ENCODE measurements at regions of chr11 and their contacts with region 1.

Region 1: GRCh38 chr11:61187505-61188130 is 15.7 kb upstream of the PGA3 start:
- DNase-seq: peak; percentile 40
- H3K4me3 ChIP-seq: no peak overlapping the region
- H3K27ac ChIP-seq: no peak overlapping the region
- H3K4me1 ChIP-seq: no peaks in the 10 kb centered on the region
- H3K27me3 ChIP-seq: no peaks in the 10 kb centered on the region
- CTCF ChIP-seq: peak; percentile 92 to 99

Region 2: DNA sequence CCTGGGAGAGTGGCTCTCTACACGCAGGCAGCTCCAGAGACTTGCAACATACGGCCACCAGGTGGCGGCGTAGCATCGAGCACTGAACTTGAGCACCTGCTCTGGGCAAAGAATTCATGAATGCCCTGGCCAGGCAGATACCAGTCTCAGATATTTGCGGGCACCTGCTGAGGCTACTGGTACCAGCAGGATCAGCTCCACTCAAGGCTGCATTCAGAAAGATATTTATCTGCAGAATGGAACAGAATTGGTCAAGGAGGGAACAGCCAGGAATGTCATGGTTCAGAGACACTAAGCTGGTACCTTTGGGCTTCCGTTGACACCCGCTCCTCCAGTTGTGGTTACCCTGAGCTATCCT is 356.5 kb before region 1 on chr11:
- CTCF ChIA-PET with region 1: no interaction called
- dilution Hi-C with region 1: no loop called
- in situ Hi-C with region 1: no loop called
- intact Hi-C with region 1: loop called (anchors 1 kb)
- DNase-seq: peak; percentile 72
- H3K4me3 ChIP-seq: peak overlapping the region in 1 of 3 experiments; percentile 24
- H3K27ac ChIP-seq: no peak overlapping the region
- H3K4me1 ChIP-seq: peaks cover 23% of the 10 kb centered on the region
- H3K27me3 ChIP-seq: peaks cover 4% of the 10 kb centered on the region
- CTCF ChIP-seq: peak; percentile 95 to 97

Region 3: GRCh38 chr11:60913793-60914632 is 273.6 kb before region 1 on chr11 and contains the start of gene TMEM109:
- CTCF ChIA-PET with region 1: no interaction called
- dilution Hi-C with region 1: no loop called
- in situ Hi-C with region 1: no loop called
- intact Hi-C with region 1: loop called (anchors 2 kb)
- DNase-seq: peak; percentile 84
- H3K4me3 ChIP-seq: peak within 1 kb of the TSS; percentile 58 to 81 (median 77)
- H3K27ac ChIP-seq: peak within 1 kb of the TSS; percentile 71
- H3K4me1 ChIP-seq: peaks cover 44% of the 10 kb centered on the region
- H3K27me3 ChIP-seq: no peaks in the 10 kb centered on the region
- CTCF ChIP-seq: no peak
- total RNA-seq, gene TMEM109: 19.8 to 44.9 TPM

Region 4: GRCh38 chr11:60970369-60970774 is 217.2 kb before region 1 on chr11:
- CTCF ChIA-PET with region 1: no interaction called
- dilution Hi-C with region 1: no loop called
- in situ Hi-C with region 1: loop called in 1 of 2 experiments (anchors 10 kb)
- intact Hi-C with region 1: loop called (anchors 1 kb)
- DNase-seq: peak; percentile 34
- H3K4me3 ChIP-seq: no peak overlapping the region
- H3K27ac ChIP-seq: no peak overlapping the region
- H3K4me1 ChIP-seq: peaks cover 6% of the 10 kb centered on the region
- H3K27me3 ChIP-seq: no peaks in the 10 kb centered on the region
- CTCF ChIP-seq: peak; percentile 91 to 94

Region 5: DNA sequence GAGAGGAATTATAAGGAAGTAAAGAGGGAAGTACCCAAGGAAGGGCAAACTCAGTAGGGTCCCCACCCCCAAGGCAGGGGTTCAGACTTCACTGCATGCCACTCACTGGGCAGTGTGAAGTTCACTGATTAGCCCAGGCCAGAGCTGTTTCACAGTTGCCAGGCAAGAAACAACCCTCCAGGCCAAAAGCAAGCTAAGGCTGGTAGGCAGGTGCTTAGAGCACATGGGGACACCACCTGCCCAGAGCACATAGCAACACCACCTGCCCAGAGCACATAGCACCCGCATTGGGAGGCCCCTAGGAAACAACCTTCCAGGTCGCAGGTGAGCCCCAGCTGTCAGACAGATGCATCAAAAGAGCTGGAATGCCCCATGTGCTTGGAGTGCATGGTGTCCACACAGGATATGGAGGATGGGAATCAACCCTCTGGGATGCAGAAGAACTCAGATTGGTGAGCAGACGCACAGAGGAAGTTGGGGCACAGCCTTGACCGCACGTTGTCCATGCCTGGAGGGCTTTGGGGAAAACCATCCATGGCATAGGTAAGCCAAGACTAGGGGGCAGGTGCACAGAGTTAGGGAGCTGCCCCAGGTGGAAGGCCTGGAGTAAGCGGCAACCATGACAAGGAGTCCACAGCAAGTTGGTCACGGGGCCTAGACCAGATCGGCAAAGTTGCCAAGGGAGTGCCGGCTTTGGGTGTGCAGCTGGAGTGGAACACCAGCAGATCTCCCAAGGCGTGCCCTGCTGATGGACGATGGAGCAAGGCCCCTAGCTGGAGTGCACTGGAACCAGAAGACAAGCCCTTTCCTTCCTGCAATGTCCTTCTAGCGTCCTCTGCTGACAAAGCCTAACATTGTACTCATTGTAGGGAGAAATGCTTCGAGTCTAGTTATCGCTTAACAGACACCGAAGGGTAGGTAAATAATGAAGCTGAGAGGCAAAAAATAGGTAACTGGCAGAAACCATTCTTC is 196.9 kb after region 1 on chr11:
- CTCF ChIA-PET with region 1: no interaction called
- dilution Hi-C with region 1: no loop called
- in situ Hi-C with region 1: no loop called
- intact Hi-C with region 1: loop called (anchors 5 kb)
- DNase-seq: no peak
- H3K4me3 ChIP-seq: no peak overlapping the region
- H3K27ac ChIP-seq: no peak overlapping the region
- H3K4me1 ChIP-seq: peaks cover 9% of the 10 kb centered on the region
- H3K27me3 ChIP-seq: no peaks in the 10 kb centered on the region
- CTCF ChIP-seq: peak; percentile 51 to 60

Measured in mammary epithelial cell (primary cell).